ENCODE measurements at regions of chr11 and their contacts with region 1.

Region 1: GRCh38 chr11:2420502-2421225 is 20.1 kb downstream of the TSSC4 start:
- DNase-seq: peak; percentile 60 to 78 (median 67)
- H3K4me3 ChIP-seq: no peak overlapping the region
- H3K4me3 Mint-ChIP-seq: no peak overlapping the region
- H3K27ac ChIP-seq: no peak overlapping the region
- H3K27ac Mint-ChIP-seq: peak overlapping the region in 1 of 8 donors; percentile 24
- H3K4me1 ChIP-seq: peaks cover 9% of the 10 kb centered on the region
- H3K4me1 Mint-ChIP-seq: peaks cover 0 to 3% (median 2%) of the 10 kb centered on the region in 3 donors
- H3K27me3 ChIP-seq: no peaks in the 10 kb centered on the region
- H3K27me3 Mint-ChIP-seq: no peaks in the 10 kb centered on the region

Region 2: DNA sequence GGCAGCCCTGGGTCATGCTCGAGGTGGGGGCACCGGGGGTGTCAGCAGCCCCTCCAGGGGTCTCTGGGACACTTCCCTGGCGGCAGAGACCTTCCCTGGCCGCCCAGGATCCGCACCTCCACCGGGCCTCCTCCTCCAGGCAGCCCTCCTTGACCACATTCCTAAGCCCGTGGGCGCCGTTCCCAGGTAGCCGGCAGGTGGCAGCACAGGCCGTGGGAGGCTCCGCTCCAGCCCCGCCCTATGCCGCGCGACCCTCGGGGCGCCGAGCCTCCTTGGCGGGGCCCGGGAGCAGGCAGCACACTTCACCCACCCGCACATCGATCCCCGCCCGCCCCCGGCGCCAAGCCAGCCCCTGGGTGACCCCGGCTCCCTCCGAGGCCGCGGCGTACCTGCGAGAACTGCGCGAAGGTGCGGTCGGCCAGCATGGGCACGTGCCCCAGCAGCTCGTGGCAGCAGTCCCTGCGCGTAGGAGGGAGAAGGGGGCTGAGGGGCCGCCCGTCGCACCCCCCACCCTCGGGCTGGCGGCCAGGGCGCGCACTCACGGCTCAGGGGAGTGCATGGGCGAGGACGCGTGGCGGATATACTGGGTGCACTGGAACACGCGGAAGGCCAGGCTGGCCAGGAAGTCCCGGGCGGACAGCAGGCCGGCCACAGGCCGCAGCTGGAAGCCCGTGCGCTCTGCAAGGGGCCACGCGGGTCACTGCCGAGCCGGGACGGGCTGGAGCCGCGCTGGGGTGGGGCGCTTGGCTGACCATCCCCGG is 254.4 kb before region 1 on chr11:
- CTCF ChIA-PET with region 1: interaction called, 22 read pairs
- POLR2A ChIA-PET with region 1: no interaction called
- DNase-seq: peak in 4 of 5 donors; percentile 24 to 41 (median 26)
- H3K4me3 ChIP-seq: no peak overlapping the region
- H3K4me3 Mint-ChIP-seq: no peak overlapping the region
- H3K27ac ChIP-seq: no peak overlapping the region
- H3K27ac Mint-ChIP-seq: no peak overlapping the region
- H3K4me1 ChIP-seq: no peaks in the 10 kb centered on the region
- H3K4me1 Mint-ChIP-seq: no peaks in the 10 kb centered on the region
- H3K27me3 ChIP-seq: no peaks in the 10 kb centered on the region
- H3K27me3 Mint-ChIP-seq: peaks cover 3 to 9% of the 10 kb centered on the region in 2 donors

Region 3: DNA sequence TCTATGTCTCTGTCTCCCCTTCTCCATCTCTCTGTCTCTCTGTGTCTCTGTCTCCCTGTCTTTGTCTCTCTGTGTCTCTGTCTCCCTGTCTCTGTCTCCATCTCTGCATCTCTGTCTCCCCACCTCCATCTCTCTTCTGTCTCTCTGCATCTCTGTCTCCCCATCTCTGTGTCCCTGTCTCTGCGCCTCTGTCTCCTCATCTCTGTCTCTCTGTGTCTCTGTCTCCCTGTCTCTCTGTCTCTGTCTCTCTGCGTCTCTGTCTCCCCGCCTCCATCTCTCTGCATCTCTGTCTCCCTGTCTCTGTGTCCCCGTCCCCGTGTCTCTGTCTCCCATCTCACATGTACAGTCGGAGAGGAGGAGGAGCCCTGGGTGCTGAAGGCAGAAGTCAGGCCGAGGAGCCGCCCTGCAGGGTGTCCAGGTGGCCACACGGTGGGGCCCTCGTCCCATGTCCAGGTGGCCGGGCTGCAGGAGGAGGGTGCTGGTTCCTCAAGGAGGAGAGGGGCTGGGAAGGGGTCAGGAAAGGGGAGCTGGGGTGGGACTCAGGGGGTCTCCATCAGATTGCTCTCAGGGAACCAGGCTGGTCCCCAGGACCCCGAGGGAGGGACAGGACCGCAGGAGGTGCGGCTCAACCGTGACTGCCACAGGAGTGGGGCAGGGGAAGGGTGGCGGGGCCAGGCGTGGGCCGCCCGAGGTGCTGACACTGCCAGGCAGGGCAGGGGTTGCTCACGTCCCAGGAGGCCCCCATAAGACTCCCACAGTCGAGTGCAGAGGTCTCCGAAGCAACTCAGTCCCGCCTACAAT is 223.5 kb before region 1 on chr11:
- CTCF ChIA-PET with region 1: interaction called, 58 read pairs
- POLR2A ChIA-PET with region 1: interaction called, 3 read pairs
- DNase-seq: peak; percentile 59 to 79 (median 62)
- H3K4me3 ChIP-seq: no peak overlapping the region
- H3K4me3 Mint-ChIP-seq: peak overlapping the region in 1 of 7 donors; percentile 24
- H3K27ac ChIP-seq: no peak overlapping the region
- H3K27ac Mint-ChIP-seq: peak overlapping the region in 2 of 8 donors; percentile 5 to 63
- H3K4me1 ChIP-seq: peaks cover 6% of the 10 kb centered on the region
- H3K4me1 Mint-ChIP-seq: peaks cover 7 to 13% (median 12%) of the 10 kb centered on the region in 3 donors
- H3K27me3 ChIP-seq: peaks cover 7% of the 10 kb centered on the region
- H3K27me3 Mint-ChIP-seq: peaks cover 0 to 3% of the 10 kb centered on the region in 2 donors

Region 4: GRCh38 chr11:2249189-2249916 is 171.3 kb before region 1 on chr11:
- CTCF ChIA-PET with region 1: no interaction called
- POLR2A ChIA-PET with region 1: no interaction called
- DNase-seq: no peak
- H3K4me3 ChIP-seq: no peak overlapping the region
- H3K4me3 Mint-ChIP-seq: no peak overlapping the region
- H3K27ac ChIP-seq: no peak overlapping the region
- H3K27ac Mint-ChIP-seq: no peak overlapping the region
- H3K4me1 ChIP-seq: no peaks in the 10 kb centered on the region
- H3K4me1 Mint-ChIP-seq: no peaks in the 10 kb centered on the region
- H3K27me3 ChIP-seq: no peaks in the 10 kb centered on the region
- H3K27me3 Mint-ChIP-seq: peaks cover 1 to 9% of the 10 kb centered on the region in 2 donors

Region 5: GRCh38 chr11:2305140-2305840 is 115.4 kb before region 1 on chr11:
- CTCF ChIA-PET with region 1: interaction called, 317 read pairs
- POLR2A ChIA-PET with region 1: interaction called, 12 read pairs
- DNase-seq: peak; percentile 71 to 88 (median 78)
- H3K4me3 ChIP-seq: peak overlapping the region; percentile 70
- H3K4me3 Mint-ChIP-seq: peak overlapping the region; percentile 77 to 98 (median 94)
- H3K27ac ChIP-seq: peak overlapping the region; percentile 67
- H3K27ac Mint-ChIP-seq: peak overlapping the region; percentile 77 to 97 (median 90)
- H3K4me1 ChIP-seq: peaks cover 53% of the 10 kb centered on the region
- H3K4me1 Mint-ChIP-seq: peaks cover 26 to 68% (median 37%) of the 10 kb centered on the region in 3 donors
- H3K27me3 ChIP-seq: no peaks in the 10 kb centered on the region
- H3K27me3 Mint-ChIP-seq: no peaks in the 10 kb centered on the region

Region 6: GRCh38 chr11:2382936-2383851 is 37.5 kb before region 1 on chr11:
- CTCF ChIA-PET with region 1: interaction called, 12 read pairs
- POLR2A ChIA-PET with region 1: no interaction called
- DNase-seq: peak in 1 of 5 donors; percentile 43
- H3K4me3 ChIP-seq: no peak overlapping the region
- H3K4me3 Mint-ChIP-seq: peak overlapping the region in 4 of 7 donors; percentile 8 to 87 (median 46)
- H3K27ac ChIP-seq: no peak overlapping the region
- H3K27ac Mint-ChIP-seq: peak overlapping the region in 7 of 8 donors; percentile 33 to 84 (median 63)
- H3K4me1 ChIP-seq: peaks cover 71% of the 10 kb centered on the region
- H3K4me1 Mint-ChIP-seq: peaks cover 66 to 94% (median 71%) of the 10 kb centered on the region in 3 donors
- H3K27me3 ChIP-seq: no peaks in the 10 kb centered on the region
- H3K27me3 Mint-ChIP-seq: no peaks in the 10 kb centered on the region

Region 7: GRCh38 chr11:2409611-2410468 is 10.8 kb before region 1 on chr11:
- CTCF ChIA-PET with region 1: interaction called, 10 read pairs
- POLR2A ChIA-PET with region 1: no interaction called
- DNase-seq: no peak
- H3K4me3 ChIP-seq: no peak overlapping the region
- H3K4me3 Mint-ChIP-seq: no peak overlapping the region
- H3K27ac ChIP-seq: no peak overlapping the region
- H3K27ac Mint-ChIP-seq: no peak overlapping the region
- H3K4me1 ChIP-seq: no peaks in the 10 kb centered on the region
- H3K4me1 Mint-ChIP-seq: no peaks in the 10 kb centered on the region
- H3K27me3 ChIP-seq: no peaks in the 10 kb centered on the region
- H3K27me3 Mint-ChIP-seq: no peaks in the 10 kb centered on the region

Region 8: DNA sequence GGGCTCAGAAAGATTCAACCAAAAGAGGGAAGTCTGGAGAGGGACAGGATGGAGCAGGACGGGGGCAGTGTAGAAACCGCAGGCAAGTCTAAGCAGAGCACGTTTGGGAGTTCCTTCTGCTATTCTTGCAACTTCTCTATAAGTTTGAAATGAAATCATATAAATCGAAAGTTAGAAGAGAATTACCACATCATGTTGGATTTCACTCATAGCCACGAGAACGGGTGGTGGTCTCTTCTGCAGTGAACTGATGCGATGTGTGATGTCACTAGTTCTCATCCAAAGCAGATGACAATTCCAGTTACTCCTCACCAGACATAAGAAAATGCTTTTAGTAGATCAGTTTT is 60.2 kb after region 1 on chr11:
- CTCF ChIA-PET with region 1: no interaction called
- POLR2A ChIA-PET with region 1: no interaction called
- DNase-seq: no peak
- H3K4me3 ChIP-seq: no peak overlapping the region
- H3K4me3 Mint-ChIP-seq: peak overlapping the region in 2 of 7 donors; percentile 7 to 40
- H3K27ac ChIP-seq: no peak overlapping the region
- H3K27ac Mint-ChIP-seq: peak overlapping the region in 1 of 8 donors; percentile 66
- H3K4me1 ChIP-seq: no peaks in the 10 kb centered on the region
- H3K4me1 Mint-ChIP-seq: peaks cover 8 to 17% (median 11%) of the 10 kb centered on the region in 3 donors
- H3K27me3 ChIP-seq: no peaks in the 10 kb centered on the region
- H3K27me3 Mint-ChIP-seq: peaks cover 5% of the 10 kb centered on the region in 2 donors